T-cell (primary cell): ENCODE measurements at regions of chr15 and their contacts with region 1.

Region 1: GRCh38 chr15:68672781-68673205 is 94.0 kb downstream of the CORO2B start:
- DNase-seq: no peak
- ATAC-seq: no peak
- H3K4me3 ChIP-seq: no peak overlapping the region
- H3K4me3 Mint-ChIP-seq: no peak overlapping the region
- H3K27ac ChIP-seq: no peak overlapping the region
- H3K27ac Mint-ChIP-seq: no peak overlapping the region
- H3K4me1 ChIP-seq: peaks cover 0 to 6% of the 10 kb centered on the region in 2 experiments
- H3K4me1 Mint-ChIP-seq: peaks cover 3 to 8% (median 6%) of the 10 kb centered on the region in 3 donors
- H3K27me3 ChIP-seq: peaks cover 0 to 27% of the 10 kb centered on the region in 2 experiments
- H3K27me3 Mint-ChIP-seq: peaks cover 21 to 24% of the 10 kb centered on the region in 2 donors

Region 2: DNA sequence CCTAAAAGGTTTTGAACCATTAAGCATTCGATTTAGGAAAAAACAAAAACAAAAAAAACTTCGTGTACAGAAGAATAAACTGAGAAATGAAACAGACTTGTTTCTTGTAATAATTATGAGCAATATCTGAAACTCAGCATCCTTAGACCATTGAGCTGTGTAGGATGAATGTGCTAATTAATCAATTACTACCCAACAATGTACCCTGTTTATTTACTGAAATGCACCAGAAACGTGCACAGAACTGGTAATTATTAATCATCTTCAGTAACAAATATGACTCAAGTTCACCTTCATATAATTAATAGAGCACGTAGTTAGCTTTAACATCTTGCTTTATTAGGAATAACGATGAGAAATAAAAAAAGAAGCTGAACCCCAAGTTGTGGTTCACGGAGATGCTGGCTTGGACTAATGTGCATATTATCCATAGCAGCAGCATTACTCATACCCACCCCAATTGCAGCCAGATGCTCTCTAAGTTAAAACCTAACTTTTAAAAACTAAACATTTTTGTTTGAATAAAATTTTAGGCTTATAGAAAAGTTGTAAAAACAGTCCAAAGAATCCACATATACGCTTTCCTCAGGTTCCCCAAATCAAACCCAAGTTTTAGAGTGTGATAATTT is 1162.1 kb before region 1 on chr15:
- CTCF ChIA-PET with region 1: no interaction called
- POLR2A ChIA-PET with region 1: no interaction called
- DNase-seq: no peak
- ATAC-seq: no peak
- H3K4me3 ChIP-seq: no peak overlapping the region
- H3K4me3 Mint-ChIP-seq: no peak overlapping the region
- H3K27ac ChIP-seq: no peak overlapping the region
- H3K27ac Mint-ChIP-seq: no peak overlapping the region
- H3K4me1 ChIP-seq: no peaks in the 10 kb centered on the region
- H3K4me1 Mint-ChIP-seq: no peaks in the 10 kb centered on the region
- H3K27me3 ChIP-seq: no peaks in the 10 kb centered on the region
- H3K27me3 Mint-ChIP-seq: no peaks in the 10 kb centered on the region

Region 3: GRCh38 chr15:68550481-68551295 is 122.1 kb before region 1 on chr15:
- CTCF ChIA-PET with region 1: interaction called in 1 of 2 experiments, 11 read pairs
- POLR2A ChIA-PET with region 1: no interaction called
- DNase-seq: peak; percentile 30 to 80 (median 60)
- ATAC-seq: peak in 3 of 4 experiments; percentile 31 to 66 (median 49)
- H3K4me3 ChIP-seq: no peak overlapping the region
- H3K4me3 Mint-ChIP-seq: no peak overlapping the region
- H3K27ac ChIP-seq: no peak overlapping the region
- H3K27ac Mint-ChIP-seq: no peak overlapping the region
- H3K4me1 ChIP-seq: no peaks in the 10 kb centered on the region
- H3K4me1 Mint-ChIP-seq: no peaks in the 10 kb centered on the region
- H3K27me3 ChIP-seq: peaks cover 0 to 55% of the 10 kb centered on the region in 2 experiments
- H3K27me3 Mint-ChIP-seq: peaks cover 38% of the 10 kb centered on the region in 2 donors